ENCODE measurements at regions of chr21 and their contacts with region 1.

Region 1: DNA sequence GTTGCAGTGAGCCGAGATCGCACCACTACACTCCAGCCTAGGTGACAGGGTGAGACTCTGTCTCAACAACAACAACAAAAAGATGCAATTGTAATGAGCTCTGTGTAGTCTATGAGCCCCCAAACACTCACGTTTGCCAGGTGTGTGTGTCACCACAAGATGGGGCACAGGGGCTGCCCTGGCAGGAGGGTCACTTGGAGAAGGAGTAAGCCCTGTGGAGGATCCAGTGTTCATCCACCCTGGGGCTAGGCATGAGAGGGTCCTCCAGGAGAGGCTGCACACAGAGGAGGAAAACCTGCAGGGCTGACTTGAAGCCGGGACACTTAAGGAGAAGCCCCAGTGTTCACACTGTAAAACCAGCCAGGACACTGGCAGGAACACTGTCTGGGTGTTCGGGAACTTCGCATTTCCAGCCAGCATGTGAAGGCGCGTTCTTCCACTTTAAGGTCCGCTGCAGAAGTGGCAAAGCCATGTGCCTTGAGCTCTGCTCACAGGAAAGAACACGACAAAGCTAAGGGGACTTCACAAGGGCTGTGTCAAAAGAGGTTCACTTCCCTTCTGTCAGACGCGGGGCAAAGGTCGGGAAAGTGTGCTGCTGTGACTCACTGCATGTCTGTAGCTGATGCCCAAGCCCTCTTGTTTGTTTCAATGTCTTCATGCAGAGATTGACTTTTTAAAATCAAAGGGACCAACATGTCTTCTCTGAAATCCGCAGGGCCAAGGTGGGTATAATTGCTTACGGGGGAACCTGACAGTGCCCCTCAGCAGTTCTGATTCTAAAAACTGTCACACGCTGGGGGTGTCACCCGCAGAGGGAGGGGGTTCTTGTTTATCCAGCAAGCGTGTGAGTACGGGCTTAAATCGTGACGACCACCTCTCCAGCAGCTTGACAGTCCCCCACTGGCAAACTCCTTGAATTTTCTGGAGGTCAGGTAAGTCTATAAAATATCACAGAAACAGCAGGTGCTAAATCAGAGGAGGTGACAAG is 102.8 kb downstream of the RIPK4 start:
- DNase-seq: peak in 1 of 5 donors; percentile 13
- H3K4me3 ChIP-seq: no peak overlapping the region
- H3K27ac ChIP-seq: no peak overlapping the region
- H3K4me1 ChIP-seq: no peaks in the 10 kb centered on the region
- H3K27me3 ChIP-seq: no peaks in the 10 kb centered on the region
- CTCF ChIP-seq: no peak
- EP300 ChIP-seq: no peak
- POLR2A ChIP-seq: no peak

Region 2: GRCh38 chr21:41460578-41461527 is 203.2 kb before region 1 on chr21:
- intact Hi-C with region 1: no loop called
- DNase-seq: peak; percentile 67 to 79 (median 69)
- H3K4me3 ChIP-seq: no peak overlapping the region
- H3K27ac ChIP-seq: no peak overlapping the region
- H3K4me1 ChIP-seq: peaks cover 1% of the 10 kb centered on the region
- H3K27me3 ChIP-seq: no peaks in the 10 kb centered on the region
- CTCF ChIP-seq: peak; percentile 42 to 51 (median 49)
- EP300 ChIP-seq: no peak
- POLR2A ChIP-seq: no peak

Region 3: DNA sequence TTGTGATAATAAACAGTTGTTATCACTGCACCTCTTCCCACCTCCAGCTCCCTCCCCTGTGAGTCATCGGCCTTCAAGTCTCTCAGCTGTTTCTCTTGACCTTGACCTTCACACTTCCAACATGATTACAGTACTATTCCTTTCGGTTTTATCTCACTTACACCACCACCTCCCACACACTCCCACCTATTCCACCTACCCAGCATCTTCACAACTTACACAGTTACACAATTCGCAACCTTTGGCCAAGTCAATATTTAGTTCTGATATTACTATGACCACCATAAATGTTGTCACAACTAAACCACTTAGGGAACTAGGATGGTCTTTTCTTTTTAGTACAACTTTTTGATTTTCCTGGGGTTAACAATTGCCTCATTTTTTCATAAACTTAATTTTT is 42.6 kb after region 1 on chr21:
- intact Hi-C with region 1: no loop called
- DNase-seq: no peak
- H3K4me3 ChIP-seq: no peak overlapping the region
- H3K27ac ChIP-seq: no peak overlapping the region
- H3K4me1 ChIP-seq: no peaks in the 10 kb centered on the region
- H3K27me3 ChIP-seq: no peaks in the 10 kb centered on the region
- CTCF ChIP-seq: no peak
- EP300 ChIP-seq: no peak
- POLR2A ChIP-seq: no peak

Region 4: DNA sequence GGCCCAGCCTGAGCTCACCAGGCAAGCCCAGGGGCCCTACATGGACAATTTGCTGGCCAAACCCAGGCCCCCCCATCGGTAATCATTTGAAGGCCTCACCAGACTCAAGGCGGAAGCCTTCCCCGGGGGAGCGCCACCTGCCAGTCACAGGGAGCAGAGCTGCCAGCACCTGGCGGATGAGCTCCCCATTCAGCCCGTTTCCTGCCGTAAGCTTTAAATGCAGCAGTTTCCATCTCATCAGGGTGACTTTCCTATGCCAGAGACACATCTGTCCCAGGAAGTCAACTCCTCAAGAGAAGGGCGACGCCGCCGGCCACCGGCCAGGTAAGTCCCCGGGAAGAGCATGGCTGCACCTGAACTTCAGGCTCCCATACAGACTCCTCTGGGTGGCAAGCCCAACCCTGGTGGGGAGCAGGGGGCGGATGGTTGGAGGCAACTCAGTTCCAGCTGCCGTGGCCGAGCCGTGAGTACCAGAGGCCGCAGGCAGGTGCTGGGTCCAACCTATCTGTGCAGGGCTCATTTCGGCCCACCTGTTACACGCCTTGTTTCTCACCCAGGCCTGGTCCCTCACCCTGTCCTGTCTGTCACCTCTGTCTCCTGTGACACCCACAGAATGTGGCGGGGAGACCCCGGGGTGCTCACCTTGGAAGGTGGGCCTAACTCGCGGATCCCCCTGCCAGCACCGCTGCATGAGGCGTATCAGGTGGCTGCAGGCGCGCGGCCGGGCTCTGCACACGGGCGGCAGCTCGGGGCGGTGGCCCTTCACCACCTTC is 82.1 kb after region 1 on chr21:
- intact Hi-C with region 1: loop called in 1 of 4 experiments (anchors 10 kb)
- DNase-seq: no peak
- H3K4me3 ChIP-seq: no peak overlapping the region
- H3K27ac ChIP-seq: no peak overlapping the region
- H3K4me1 ChIP-seq: no peaks in the 10 kb centered on the region
- H3K27me3 ChIP-seq: no peaks in the 10 kb centered on the region
- CTCF ChIP-seq: no peak
- EP300 ChIP-seq: no peak
- POLR2A ChIP-seq: no peak